ENCODE measurements at regions of chr7 and their contacts with region 1.

Region 1: DNA sequence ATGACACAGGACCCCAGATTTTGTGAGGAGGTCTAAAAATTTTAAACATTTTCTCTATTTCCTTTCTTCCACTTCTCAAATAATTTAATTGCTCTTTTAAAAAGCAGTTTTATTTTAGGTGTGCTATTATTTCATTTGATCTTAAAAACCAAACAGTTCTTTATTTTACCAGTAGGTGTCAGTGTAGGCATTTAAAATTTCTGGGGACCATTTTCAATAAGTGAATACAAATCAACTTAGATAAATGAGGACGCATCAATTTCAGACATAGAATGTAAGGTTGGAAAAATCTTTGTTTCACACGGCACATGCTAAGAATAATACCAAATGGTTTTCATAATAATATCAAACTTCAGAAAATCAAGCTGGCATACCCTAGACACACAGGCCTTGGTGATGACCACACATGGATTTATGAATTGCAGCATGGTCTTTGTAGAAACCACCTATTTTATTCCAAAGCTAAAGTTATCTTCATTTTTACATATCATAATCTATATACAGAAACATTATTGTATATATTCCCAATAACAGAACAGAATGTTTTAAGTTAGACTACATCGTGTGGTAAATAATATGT is 127.6 kb upstream of the SLC26A5 start:
- DNase-seq: peak in 1 of 2 donors; percentile 54
- H3K4me3 ChIP-seq: no peak overlapping the region
- H3K27ac ChIP-seq: no peak overlapping the region
- H3K4me1 ChIP-seq: no peaks in the 10 kb centered on the region
- H3K27me3 ChIP-seq: no peaks in the 10 kb centered on the region
- CTCF ChIP-seq: peak in 5 of 7 experiments; percentile 43 to 64 (median 49)
- EP300 ChIP-seq: no peak
- POLR2A ChIP-seq: no peak

Region 2: DNA sequence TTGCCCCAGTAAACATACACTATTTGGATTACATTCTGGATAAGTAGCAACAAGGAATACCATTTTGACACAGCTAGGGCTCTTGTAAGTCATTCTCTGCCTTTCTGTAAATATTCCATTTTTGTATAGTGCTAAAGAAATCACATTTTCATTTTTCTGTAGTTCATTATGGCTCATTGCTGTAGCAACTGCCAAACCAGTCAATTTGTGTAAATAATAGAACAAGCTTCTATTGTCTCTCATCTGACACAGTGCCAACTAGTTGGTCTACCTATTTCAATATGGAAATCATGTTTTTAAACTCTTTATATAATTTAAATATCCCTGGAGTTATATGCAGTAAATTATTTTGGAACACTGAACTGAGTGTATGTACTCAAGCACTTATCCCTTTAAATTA is 222.2 kb after region 1 on chr7:
- intact Hi-C with region 1: no loop called
- DNase-seq: peak in 1 of 2 donors; percentile 15
- H3K4me3 ChIP-seq: no peak overlapping the region
- H3K27ac ChIP-seq: no peak overlapping the region
- H3K4me1 ChIP-seq: no peaks in the 10 kb centered on the region
- H3K27me3 ChIP-seq: no peaks in the 10 kb centered on the region
- CTCF ChIP-seq: no peak
- EP300 ChIP-seq: no peak
- POLR2A ChIP-seq: no peak

Region 3: DNA sequence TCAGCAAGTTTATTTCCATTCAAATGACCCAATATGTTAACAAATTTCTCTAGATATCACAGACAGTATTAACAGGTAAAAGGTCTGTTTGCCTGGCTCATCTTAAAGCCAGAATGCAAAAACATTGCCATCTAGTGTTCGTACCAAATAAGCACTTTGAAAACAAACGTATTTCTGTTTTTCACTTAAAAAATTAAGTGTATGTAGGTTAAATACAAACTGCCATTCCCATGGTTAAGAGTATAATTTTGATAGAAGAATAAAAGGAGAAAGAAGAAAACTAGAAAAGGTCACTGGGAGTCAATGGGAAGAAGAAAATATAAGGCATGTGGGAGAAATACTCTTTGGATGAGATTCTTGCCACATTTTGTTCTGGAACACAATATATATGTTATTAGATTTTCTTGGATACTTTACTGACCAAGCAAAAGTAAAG is 583.3 kb after region 1 on chr7:
- intact Hi-C with region 1: loop called (anchors 10 kb)
- DNase-seq: peak in 1 of 2 donors; percentile 32
- H3K4me3 ChIP-seq: no peak overlapping the region
- H3K27ac ChIP-seq: no peak overlapping the region
- H3K4me1 ChIP-seq: no peaks in the 10 kb centered on the region
- H3K27me3 ChIP-seq: no peaks in the 10 kb centered on the region
- CTCF ChIP-seq: peak in 4 of 7 experiments; percentile 25 to 36 (median 32)
- EP300 ChIP-seq: no peak
- POLR2A ChIP-seq: no peak

Measured in stomach (tissue), 19 donors.